GM13977 (cell line): ENCODE measurements at regions of chr12 and their contacts with region 1.

Region 1: DNA sequence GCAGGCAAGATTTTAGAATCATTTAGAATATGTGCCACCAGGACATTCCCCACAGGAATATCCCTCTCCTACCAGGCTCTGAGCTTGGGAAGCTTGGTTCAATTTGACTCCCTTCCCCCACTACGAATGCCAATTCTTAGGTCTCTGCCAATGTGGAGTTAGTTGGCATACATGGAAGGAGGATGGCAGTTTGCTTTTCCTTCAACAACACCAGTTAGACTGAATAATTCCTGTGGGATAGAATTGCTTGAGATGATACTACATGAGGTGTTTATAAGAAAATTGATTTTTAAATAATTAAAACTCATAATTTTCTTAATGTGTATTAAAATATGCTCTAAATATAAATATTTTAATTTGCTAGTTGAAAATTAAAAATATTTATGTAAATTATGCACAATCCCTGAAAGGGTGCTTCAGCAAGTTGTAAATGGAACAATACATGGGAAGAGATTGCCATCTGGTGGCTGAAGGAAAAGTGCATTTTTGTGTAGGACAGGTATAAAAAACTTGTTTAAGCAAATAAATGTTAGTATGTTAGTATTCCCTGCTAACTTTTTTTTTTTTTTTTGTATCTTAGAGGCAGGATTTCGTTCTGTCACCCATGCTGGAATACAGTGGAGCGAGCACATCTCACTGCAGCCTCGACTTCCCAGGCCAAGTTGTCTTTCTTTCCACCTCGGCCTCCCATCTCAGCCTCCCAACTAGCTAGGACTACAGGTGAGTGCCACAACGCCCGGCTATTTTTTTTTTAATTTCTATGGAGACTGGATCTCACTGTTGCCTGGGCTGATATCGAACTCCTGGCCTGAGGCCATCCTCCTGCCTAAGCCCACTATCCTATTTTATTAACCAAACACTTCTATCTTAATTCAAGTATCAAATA is 25.8 kb upstream of the STRAP start:
- DNase-seq: peak; percentile 27
- CTCF ChIP-seq: peak; percentile 69

Region 2: GRCh38 chr12:15227004-15227679 is 629.2 kb before region 1 on chr12:
- in situ Hi-C with region 1: loop called (anchors 25 kb)
- DNase-seq: peak; percentile 23
- CTCF ChIP-seq: peak; percentile 59

Region 3: DNA sequence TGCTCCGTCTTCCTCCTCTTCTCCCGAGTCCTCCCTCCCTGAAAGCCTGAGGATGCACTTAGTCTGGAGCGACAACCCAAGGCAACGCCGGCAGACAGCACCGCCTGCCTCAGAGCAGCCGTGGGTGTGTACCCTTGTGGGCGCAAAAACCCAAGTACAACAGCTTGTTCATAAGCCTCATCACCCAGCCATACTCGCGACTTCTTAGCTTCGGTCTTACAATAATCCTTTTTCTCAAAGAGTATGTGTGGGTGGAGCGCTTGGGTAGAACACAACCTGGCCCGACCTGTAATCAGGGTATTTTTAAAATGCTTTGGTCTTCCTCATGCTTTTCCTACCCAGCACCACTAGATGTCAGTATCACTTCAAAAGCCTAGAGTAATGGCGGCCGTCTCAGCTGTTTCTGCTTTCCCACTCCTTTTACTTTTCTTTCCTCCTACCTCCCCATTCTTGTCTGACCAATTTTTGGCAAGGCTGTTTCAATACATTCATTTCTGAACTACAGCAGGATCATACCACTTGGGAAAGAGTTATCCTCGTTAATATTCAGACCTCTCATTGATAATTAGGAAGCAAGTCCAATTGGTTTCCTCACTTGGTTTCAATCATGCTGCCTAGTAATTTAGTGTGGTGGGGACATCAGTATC is 266.0 kb before region 1 on chr12:
- in situ Hi-C with region 1: loop called (anchors 10 kb)
- DNase-seq: peak; percentile 71
- CTCF ChIP-seq: peak; percentile 84